Mammary epithelial cell (primary cell): ENCODE measurements at regions of chr10 and their contacts with region 1.

Region 1: DNA sequence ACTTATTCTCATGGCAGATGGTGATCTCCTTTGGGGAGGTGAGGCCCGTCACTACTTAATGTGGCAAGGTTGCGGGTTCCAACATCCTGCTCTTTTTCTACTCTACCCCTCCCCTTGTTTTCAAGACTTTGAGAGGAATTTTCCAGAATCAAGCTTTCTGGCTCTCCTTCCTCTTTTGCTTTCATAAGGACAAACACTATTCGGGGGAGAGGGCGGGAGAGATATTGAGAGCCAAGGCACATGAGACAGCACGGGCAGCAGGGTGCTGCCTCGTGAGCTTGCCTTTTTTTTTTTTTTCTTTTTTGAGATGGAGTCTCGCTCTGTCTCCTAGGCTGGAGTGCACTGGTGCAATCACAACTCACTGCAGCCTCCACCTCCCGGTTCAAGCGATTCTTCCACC is 6.9 kb upstream of the PFKFB3 start:
- DNase-seq: no peak
- H3K4me3 ChIP-seq: no peak overlapping the region
- H3K27ac ChIP-seq: no peak overlapping the region
- H3K4me1 ChIP-seq: peaks cover 3% of the 10 kb centered on the region
- H3K27me3 ChIP-seq: no peaks in the 10 kb centered on the region
- CTCF ChIP-seq: no peak

Region 2: GRCh38 chr10:5525561-5526341 is 670.1 kb before region 1 on chr10:
- CTCF ChIA-PET with region 1: no interaction called
- dilution Hi-C with region 1: no loop called
- in situ Hi-C with region 1: no loop called
- intact Hi-C with region 1: no loop called
- DNase-seq: peak; percentile 90
- H3K4me3 ChIP-seq: peak overlapping the region; percentile 6 to 46 (median 43)
- H3K27ac ChIP-seq: peak overlapping the region; percentile 69
- H3K4me1 ChIP-seq: peaks cover 29% of the 10 kb centered on the region
- H3K27me3 ChIP-seq: no peaks in the 10 kb centered on the region
- CTCF ChIP-seq: no peak

Region 3: DNA sequence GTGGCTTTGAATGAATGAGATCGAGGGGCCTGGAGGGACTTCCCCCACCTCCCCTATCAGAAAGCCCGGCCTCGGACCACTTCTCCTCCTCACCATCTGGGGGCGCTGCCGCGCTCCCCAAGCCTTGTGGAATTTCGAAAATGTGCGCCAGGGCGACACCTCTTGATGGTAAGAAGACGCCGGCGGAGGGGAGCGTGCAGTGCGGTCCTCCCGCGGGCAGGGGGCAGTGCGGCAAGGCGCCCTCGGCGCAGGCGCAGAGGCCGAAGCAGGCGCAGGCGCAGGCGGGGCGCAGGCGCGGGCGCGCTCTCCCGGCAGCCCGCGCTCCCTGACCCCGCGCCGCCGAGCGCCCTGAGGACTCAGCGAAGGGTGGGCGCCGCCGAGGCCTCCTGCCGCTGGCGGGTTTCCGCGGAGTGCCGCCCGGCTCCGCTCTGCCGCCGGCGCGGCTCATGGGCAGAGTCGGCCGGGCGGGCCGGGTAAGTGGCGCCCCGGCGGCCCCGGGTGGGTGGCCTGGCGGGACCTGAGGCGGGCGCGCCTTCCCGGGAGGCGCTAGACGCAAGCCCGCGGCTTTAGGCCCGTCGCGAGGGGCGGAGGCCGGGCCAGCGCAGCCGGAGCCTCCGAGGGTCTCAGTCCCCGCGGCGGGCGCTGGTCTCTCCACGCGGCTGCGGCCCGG is 107.0 kb before region 1 on chr10 and contains the start of gene RBM17:
- CTCF ChIA-PET with region 1: no interaction called
- dilution Hi-C with region 1: loop called (anchors 5 kb)
- in situ Hi-C with region 1: no loop called
- intact Hi-C with region 1: no loop called
- DNase-seq: peak; percentile 89
- H3K4me3 ChIP-seq: peak within 1 kb of the TSS; percentile 74 to 77 (median 76)
- H3K27ac ChIP-seq: peak within 1 kb of the TSS; percentile 82
- H3K4me1 ChIP-seq: peaks cover 15% of the 10 kb centered on the region
- H3K27me3 ChIP-seq: peaks cover 2% of the 10 kb centered on the region
- CTCF ChIP-seq: peak; percentile 100
- total RNA-seq, gene RBM17: 31.5 to 120 TPM

Region 4: DNA sequence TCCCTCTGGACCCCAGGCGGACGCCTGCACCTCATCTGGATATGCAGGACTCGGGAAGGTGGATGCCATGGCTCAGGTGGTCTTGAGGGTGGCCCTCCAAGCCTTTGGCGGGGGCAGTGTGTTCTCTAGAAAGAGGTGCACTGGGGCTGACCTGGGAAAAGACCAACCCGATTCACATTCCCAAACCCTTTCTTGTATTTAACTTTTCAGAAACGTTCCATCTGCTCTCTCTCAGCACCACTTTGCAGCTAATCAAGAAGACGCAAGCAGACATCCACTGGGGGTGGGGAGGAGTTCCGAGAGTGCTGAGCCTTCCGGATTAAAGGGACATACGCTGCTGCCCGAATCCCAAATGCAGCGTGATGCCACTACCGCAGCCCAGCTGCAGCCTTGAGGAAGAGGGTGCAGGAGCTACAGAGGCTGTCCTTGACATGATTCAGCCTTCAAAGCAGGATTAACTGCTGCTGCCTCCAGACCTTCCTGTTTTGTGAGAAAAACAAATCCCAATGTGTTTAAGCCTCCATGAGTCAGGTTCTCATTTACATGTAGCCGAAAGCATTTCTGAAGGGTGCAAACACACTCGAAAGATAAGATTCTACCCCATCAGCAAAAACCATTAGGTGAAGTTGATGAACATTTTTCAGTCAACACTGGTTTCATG is 67.1 kb before region 1 on chr10:
- CTCF ChIA-PET with region 1: no interaction called
- dilution Hi-C with region 1: loop called (anchors 5 kb)
- in situ Hi-C with region 1: no loop called
- intact Hi-C with region 1: no loop called
- DNase-seq: no peak
- H3K4me3 ChIP-seq: no peak overlapping the region
- H3K27ac ChIP-seq: no peak overlapping the region
- H3K4me1 ChIP-seq: peaks cover 6% of the 10 kb centered on the region
- H3K27me3 ChIP-seq: no peaks in the 10 kb centered on the region
- CTCF ChIP-seq: no peak

Region 5: GRCh38 chr10:6144406-6145165 is 51.3 kb before region 1 on chr10:
- CTCF ChIA-PET with region 1: no interaction called
- dilution Hi-C with region 1: loop called (anchors 5 kb)
- in situ Hi-C with region 1: no loop called
- intact Hi-C with region 1: no loop called
- DNase-seq: peak; percentile 76
- H3K4me3 ChIP-seq: peak overlapping the region; percentile 81 to 92 (median 87)
- H3K27ac ChIP-seq: peak overlapping the region; percentile 70
- H3K4me1 ChIP-seq: peaks cover 9% of the 10 kb centered on the region
- H3K27me3 ChIP-seq: no peaks in the 10 kb centered on the region
- CTCF ChIP-seq: no peak

Region 6: DNA sequence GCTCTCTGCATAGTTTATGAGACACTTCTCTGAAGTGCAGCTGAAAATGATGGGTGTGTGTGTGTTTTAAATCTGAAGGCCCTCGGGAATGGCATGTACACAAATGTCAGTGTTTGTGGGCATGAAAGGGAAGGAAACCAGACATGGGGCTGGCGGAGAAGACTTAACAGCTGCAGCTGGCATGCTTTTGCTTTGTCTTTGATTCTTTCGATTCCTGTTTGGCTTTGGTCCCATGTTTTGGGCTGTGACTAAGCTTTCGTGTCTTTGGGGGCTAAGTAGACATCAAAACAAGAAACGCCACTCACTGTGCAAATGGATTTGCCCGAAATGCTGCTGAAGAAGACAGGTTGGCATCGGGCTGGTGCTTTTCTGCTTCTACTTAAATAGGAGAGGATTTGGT is 186.2 kb after region 1 on chr10:
- CTCF ChIA-PET with region 1: no interaction called
- dilution Hi-C with region 1: loop called (anchors 10 kb)
- in situ Hi-C with region 1: no loop called
- intact Hi-C with region 1: no loop called
- DNase-seq: no peak
- H3K4me3 ChIP-seq: no peak overlapping the region
- H3K27ac ChIP-seq: no peak overlapping the region
- H3K4me1 ChIP-seq: no peaks in the 10 kb centered on the region
- H3K27me3 ChIP-seq: no peaks in the 10 kb centered on the region
- CTCF ChIP-seq: no peak